Natural killer cell (primary cell): ENCODE measurements at regions of chr3 and their contacts with region 1.

Region 1: DNA sequence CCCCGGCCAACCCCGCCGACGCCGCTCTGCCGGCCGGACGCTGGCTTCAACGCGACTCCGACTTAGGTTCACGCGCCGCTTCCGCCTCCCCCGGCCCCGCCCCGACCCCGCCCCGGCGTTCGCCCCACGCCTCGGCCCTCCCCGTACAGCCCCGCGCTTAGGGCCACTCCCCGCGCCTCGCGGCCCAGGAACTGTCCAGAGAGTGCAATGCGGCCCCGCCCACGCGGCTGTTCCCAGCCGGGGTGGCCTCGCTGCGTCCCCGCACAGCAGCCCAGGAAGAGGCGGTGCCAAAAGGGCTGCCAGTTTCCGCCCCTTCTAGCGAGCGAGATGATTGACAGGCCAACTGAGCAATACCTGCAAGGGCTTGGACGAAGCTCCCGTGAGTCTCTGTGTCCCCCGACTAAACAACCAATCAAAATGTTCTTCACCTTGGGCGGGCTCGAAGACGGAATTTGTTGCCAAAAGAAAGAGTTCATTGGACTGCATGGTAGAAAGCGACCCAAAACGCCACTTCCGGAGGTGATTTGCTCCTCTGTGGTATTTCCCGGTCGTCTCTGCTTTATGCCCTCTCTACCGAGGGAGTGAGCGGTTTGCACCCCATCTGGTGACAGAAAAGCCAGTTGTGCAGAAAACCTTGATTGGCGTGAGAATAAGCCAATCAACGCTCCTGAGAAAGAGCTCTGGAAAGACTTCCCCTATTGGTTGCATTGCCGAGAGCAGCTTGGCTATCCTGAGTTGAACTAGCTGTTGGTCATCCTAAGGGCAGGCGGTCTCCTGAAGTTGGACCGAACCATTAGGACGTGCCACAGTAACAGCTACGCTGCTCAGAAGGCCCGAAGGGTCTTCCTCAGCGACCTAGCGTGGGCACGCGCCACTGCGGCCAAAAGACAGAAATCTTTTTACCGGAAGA is at the start of gene UBP1:
- DNase-seq: peak; percentile 95 to 99
- ATAC-seq: peak; percentile 83 to 91 (median 85)
- H3K4me3 ChIP-seq: peak within 1 kb of the TSS; percentile 91
- H3K4me3 Mint-ChIP-seq: peak within 1 kb of the TSS; percentile 100
- H3K27ac ChIP-seq: peak within 1 kb of the TSS; percentile 98
- H3K27ac Mint-ChIP-seq: peak within 1 kb of the TSS; percentile 99 to 100
- H3K4me1 ChIP-seq: peaks cover 20% of the 10 kb centered on the region
- H3K4me1 Mint-ChIP-seq: peaks cover 44 to 46% of the 10 kb centered on the region in 2 donors
- H3K27me3 ChIP-seq: no peaks in the 10 kb centered on the region
- H3K27me3 Mint-ChIP-seq: no peaks in the 10 kb centered on the region
- CTCF ChIP-seq: no peak
- total RNA-seq, gene UBP1: 70.3 to 78.4 (median 76.7) TPM

Region 2: GRCh38 chr3:33096093-33096868 is 344.3 kb before region 1 on chr3:
- intact Hi-C with region 1: loop called (anchors 5 kb)
- DNase-seq: peak; percentile 36 to 68
- ATAC-seq: peak; percentile 52 to 72 (median 57)
- H3K4me3 ChIP-seq: peak overlapping the region; percentile 88
- H3K4me3 Mint-ChIP-seq: peak overlapping the region; percentile 92
- H3K27ac ChIP-seq: peak overlapping the region; percentile 93
- H3K27ac Mint-ChIP-seq: peak overlapping the region; percentile 65 to 87
- H3K4me1 ChIP-seq: peaks cover 18% of the 10 kb centered on the region
- H3K4me1 Mint-ChIP-seq: peaks cover 32 to 33% of the 10 kb centered on the region in 2 donors
- H3K27me3 ChIP-seq: no peaks in the 10 kb centered on the region
- H3K27me3 Mint-ChIP-seq: no peaks in the 10 kb centered on the region
- CTCF ChIP-seq: no peak

Region 3: GRCh38 chr3:33113772-33114621 is 326.6 kb before region 1 on chr3 and contains the start of gene CRTAP:
- intact Hi-C with region 1: loop called (anchors 5 kb)
- DNase-seq: peak; percentile 77 to 91
- ATAC-seq: peak; percentile 89 to 94 (median 90)
- H3K4me3 ChIP-seq: peak within 1 kb of the TSS; percentile 43
- H3K4me3 Mint-ChIP-seq: peak within 1 kb of the TSS; percentile 88
- H3K27ac ChIP-seq: peak within 1 kb of the TSS; percentile 50
- H3K27ac Mint-ChIP-seq: peak within 1 kb of the TSS; percentile 66 to 86
- H3K4me1 ChIP-seq: peaks cover 19% of the 10 kb centered on the region
- H3K4me1 Mint-ChIP-seq: peaks cover 9 to 19% of the 10 kb centered on the region in 2 donors
- H3K27me3 ChIP-seq: no peaks in the 10 kb centered on the region
- H3K27me3 Mint-ChIP-seq: no peaks in the 10 kb centered on the region
- CTCF ChIP-seq: no peak
- total RNA-seq, gene CRTAP: 32.4 to 38.2 (median 37.9) TPM

Region 4: GRCh38 chr3:33372218-33373081 is 68.1 kb before region 1 on chr3:
- intact Hi-C with region 1: no loop called
- DNase-seq: peak in 1 of 2 donors; percentile 68
- ATAC-seq: peak; percentile 64 to 80 (median 70)
- H3K4me3 ChIP-seq: no peak overlapping the region
- H3K4me3 Mint-ChIP-seq: no peak overlapping the region
- H3K27ac ChIP-seq: no peak overlapping the region
- H3K27ac Mint-ChIP-seq: no peak overlapping the region
- H3K4me1 ChIP-seq: peaks cover 3% of the 10 kb centered on the region
- H3K4me1 Mint-ChIP-seq: peaks cover 9 to 11% of the 10 kb centered on the region in 2 donors
- H3K27me3 ChIP-seq: peaks cover 3% of the 10 kb centered on the region
- H3K27me3 Mint-ChIP-seq: peaks cover 7 to 16% of the 10 kb centered on the region in 2 donors
- CTCF ChIP-seq: peak; percentile 88

Region 5: GRCh38 chr3:33658991-33659848 is 218.6 kb after region 1 on chr3:
- intact Hi-C with region 1: loop called (anchors 5 kb)
- DNase-seq: peak; percentile 39 to 63
- ATAC-seq: peak; percentile 85 to 92 (median 87)
- H3K4me3 ChIP-seq: peak overlapping the region; percentile 41
- H3K4me3 Mint-ChIP-seq: peak overlapping the region; percentile 88
- H3K27ac ChIP-seq: peak overlapping the region; percentile 68
- H3K27ac Mint-ChIP-seq: peak overlapping the region; percentile 63 to 72
- H3K4me1 ChIP-seq: peaks cover 8% of the 10 kb centered on the region
- H3K4me1 Mint-ChIP-seq: peaks cover 34% of the 10 kb centered on the region in 2 donors
- H3K27me3 ChIP-seq: no peaks in the 10 kb centered on the region
- H3K27me3 Mint-ChIP-seq: no peaks in the 10 kb centered on the region
- CTCF ChIP-seq: no peak

Region 6: GRCh38 chr3:33717866-33718594 is 277.5 kb after region 1 on chr3 and contains the start of gene CLASP2:
- intact Hi-C with region 1: loop called (anchors 5 kb)
- DNase-seq: peak; percentile 85 to 94
- ATAC-seq: peak; percentile 81 to 91 (median 87)
- H3K4me3 ChIP-seq: peak within 1 kb of the TSS; percentile 64
- H3K4me3 Mint-ChIP-seq: no peak within 1 kb of the TSS
- H3K27ac ChIP-seq: peak within 1 kb of the TSS; percentile 93
- H3K27ac Mint-ChIP-seq: no peak within 1 kb of the TSS
- H3K4me1 ChIP-seq: peaks cover 13% of the 10 kb centered on the region
- H3K4me1 Mint-ChIP-seq: peaks cover 6 to 10% of the 10 kb centered on the region in 2 donors
- H3K27me3 ChIP-seq: no peaks in the 10 kb centered on the region
- H3K27me3 Mint-ChIP-seq: peaks cover 4 to 20% of the 10 kb centered on the region in 2 donors
- CTCF ChIP-seq: no peak
- total RNA-seq, gene CLASP2: 93.8 to 109 (median 99.3) TPM

Region 7: DNA sequence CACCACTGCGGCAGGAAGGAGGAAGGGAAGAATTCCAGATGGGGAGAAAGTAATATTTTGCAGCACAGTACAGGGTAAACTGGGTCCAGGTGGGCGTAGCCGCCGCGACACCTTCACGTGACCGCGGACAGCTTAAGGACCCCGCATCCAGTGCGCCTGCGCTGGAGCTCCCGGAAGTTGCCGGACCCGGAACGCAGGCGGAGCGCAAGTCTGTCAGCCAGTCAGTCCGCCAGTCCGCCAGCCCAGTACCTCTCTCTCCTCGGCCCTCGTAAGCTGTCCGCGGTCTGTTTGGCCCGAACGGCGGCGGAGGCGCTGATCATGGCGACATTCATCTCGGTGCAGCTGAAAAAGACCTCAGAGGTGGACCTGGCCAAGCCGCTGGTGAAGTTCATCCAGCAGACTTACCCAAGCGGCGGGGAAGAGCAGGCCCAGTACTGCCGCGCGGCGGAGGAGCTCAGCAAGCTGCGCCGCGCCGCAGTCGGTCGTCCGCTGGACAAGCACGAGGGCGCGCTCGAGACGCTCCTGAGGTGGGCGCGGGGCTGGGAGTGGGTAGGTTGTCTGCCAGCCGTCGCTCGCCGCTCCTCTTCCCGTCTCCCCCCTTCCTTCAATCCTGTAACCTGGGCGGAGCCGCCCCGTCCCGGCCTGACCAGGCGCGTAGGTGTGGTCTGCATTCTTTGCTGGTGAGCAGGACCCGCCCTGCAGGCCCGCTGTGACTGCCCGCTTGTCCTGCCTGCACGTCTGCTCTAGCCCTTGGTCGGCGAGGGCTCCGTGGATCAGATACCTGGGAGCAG is 358.0 kb after region 1 on chr3 and contains the start of gene PDCD6IP:
- intact Hi-C with region 1: loop called (anchors 1 kb)
- DNase-seq: peak; percentile 89 to 94
- ATAC-seq: peak; percentile 87 to 93 (median 92)
- H3K4me3 ChIP-seq: peak within 1 kb of the TSS; percentile 69
- H3K4me3 Mint-ChIP-seq: peak within 1 kb of the TSS; percentile 96
- H3K27ac ChIP-seq: peak within 1 kb of the TSS; percentile 74
- H3K27ac Mint-ChIP-seq: peak within 1 kb of the TSS; percentile 92 to 94
- H3K4me1 ChIP-seq: peaks cover 20% of the 10 kb centered on the region
- H3K4me1 Mint-ChIP-seq: peaks cover 50 to 53% of the 10 kb centered on the region in 2 donors
- H3K27me3 ChIP-seq: no peaks in the 10 kb centered on the region
- H3K27me3 Mint-ChIP-seq: no peaks in the 10 kb centered on the region
- CTCF ChIP-seq: no peak
- total RNA-seq, gene PDCD6IP: 170 to 182 (median 179) TPM